Ovary (tissue), 10 donors: ENCODE measurements at regions of chr1 and their contacts with region 1.

Region 1: GRCh38 chr1:211944733-211945500 is 90.4 kb downstream of the INTS7 start:
- DNase-seq: no peak
- H3K4me3 ChIP-seq: no peak overlapping the region
- H3K27ac ChIP-seq: no peak overlapping the region
- H3K4me1 ChIP-seq: peaks cover 1% of the 10 kb centered on the region
- H3K27me3 ChIP-seq: no peaks in the 10 kb centered on the region
- CTCF ChIP-seq: no peak
- EP300 ChIP-seq: no peak
- POLR2A ChIP-seq: no peak

Region 2: GRCh38 chr1:210618369-210618768 is 1326.5 kb before region 1 on chr1:
- intact Hi-C with region 1: loop called in 1 of 4 experiments (anchors 5 kb)
- DNase-seq: no peak
- H3K4me3 ChIP-seq: no peak overlapping the region
- H3K27ac ChIP-seq: no peak overlapping the region
- H3K4me1 ChIP-seq: no peaks in the 10 kb centered on the region
- H3K27me3 ChIP-seq: no peaks in the 10 kb centered on the region
- CTCF ChIP-seq: no peak
- EP300 ChIP-seq: no peak
- POLR2A ChIP-seq: no peak